Body of pancreas (tissue), 4 donors: ENCODE measurements at regions of chr7 and their contacts with region 1.

Region 1: GRCh38 chr7:45911306-45911705 is 9.8 kb downstream of the IGFBP3 start:
- DNase-seq: no peak
- ATAC-seq: no peak
- H3K4me3 ChIP-seq: no peak overlapping the region
- H3K27ac ChIP-seq: no peak overlapping the region
- H3K4me1 ChIP-seq: no peaks in the 10 kb centered on the region
- H3K27me3 ChIP-seq: no peaks in the 10 kb centered on the region
- CTCF ChIP-seq: no peak
- POLR2A ChIP-seq: no peak

Region 2: GRCh38 chr7:47179812-47180515 is 1268.7 kb after region 1 on chr7:
- intact Hi-C with region 1: loop called (anchors 5 kb)
- DNase-seq: peak; percentile 67 to 76 (median 70)
- ATAC-seq: peak; percentile 66
- H3K4me3 ChIP-seq: no peak overlapping the region
- H3K27ac ChIP-seq: no peak overlapping the region
- H3K4me1 ChIP-seq: peaks cover 53% of the 10 kb centered on the region
- H3K27me3 ChIP-seq: no peaks in the 10 kb centered on the region
- CTCF ChIP-seq: peak; percentile 54 to 91 (median 80)
- POLR2A ChIP-seq: no peak